ENCODE measurements at regions of chr17 and their contacts with region 1.

Region 1: DNA sequence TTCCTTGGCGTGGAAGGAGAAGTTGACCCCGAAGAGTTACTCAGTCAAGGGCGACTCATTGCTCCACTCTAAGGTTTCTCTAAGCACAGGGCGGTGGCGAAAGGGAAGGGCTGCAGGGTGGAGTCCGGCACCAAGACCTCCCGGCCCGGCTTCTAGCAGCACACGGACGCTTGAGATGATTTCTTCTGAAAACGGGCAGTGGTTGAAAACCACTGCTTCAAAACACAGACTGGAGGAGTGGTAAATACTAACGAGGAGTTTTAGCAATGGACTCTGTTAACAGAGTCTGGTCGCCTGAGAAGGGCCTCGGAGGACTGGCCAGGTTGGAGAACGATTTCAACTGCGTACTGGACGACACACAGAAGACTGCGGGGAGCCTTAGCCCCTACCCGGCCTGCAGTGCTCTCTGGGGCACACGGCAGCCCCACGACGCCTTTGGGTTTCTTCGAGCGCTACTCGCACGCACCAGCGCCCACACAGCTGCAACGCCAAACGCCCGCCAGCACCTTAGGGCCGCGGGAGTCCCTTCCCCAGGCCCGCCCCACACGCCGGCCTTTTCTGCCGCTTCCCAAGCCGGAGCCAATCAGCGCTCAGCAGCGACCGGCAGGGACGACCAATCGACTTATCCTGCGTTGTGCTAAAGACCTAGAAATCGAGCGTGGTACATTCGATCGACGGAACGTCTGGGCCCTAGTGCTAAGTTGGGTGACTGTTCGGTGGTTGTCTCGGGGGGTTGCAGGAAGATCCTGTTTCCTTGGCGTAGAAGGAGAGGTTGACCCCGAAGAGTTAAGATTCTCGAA is 14.4 kb upstream of the CA4 start:
- DNase-seq: peak; percentile 94
- CTCF ChIP-seq: no peak

Region 2: GRCh38 chr17:60345227-60345626 is 209.9 kb after region 1 on chr17:
- in situ Hi-C with region 1: no loop called
- DNase-seq: no peak
- CTCF ChIP-seq: no peak

Region 3: GRCh38 chr17:60421273-60421934 is 286.1 kb after region 1 on chr17:
- in situ Hi-C with region 1: loop called (anchors 25 kb)
- DNase-seq: peak; percentile 89
- CTCF ChIP-seq: peak; percentile 86

Region 4: DNA sequence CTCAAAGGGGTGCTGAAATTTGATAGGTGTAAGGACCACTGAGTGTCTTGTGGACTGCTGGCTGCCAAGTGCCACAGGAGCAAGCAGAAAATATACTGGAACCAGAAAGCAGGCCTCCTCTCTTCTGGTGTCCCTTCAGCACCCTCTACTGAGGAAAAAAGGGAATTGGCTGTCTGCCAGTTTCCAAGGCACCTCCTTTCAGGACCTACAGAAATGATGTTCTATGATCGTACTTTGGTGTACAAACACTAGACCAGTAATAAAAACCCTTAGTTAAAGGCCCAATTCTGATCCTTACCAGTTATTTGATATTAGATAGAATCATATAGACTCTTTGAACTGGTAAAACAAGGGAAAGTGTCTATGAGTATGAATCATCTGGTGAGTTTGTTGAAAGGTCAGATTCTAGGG is 506.5 kb after region 1 on chr17:
- in situ Hi-C with region 1: loop called (anchors 25 kb)
- DNase-seq: peak; percentile 57
- CTCF ChIP-seq: peak; percentile 27

Measured in GM13976 (cell line).